ENCODE measurements at regions of chr11 and their contacts with region 1.

Region 1: DNA sequence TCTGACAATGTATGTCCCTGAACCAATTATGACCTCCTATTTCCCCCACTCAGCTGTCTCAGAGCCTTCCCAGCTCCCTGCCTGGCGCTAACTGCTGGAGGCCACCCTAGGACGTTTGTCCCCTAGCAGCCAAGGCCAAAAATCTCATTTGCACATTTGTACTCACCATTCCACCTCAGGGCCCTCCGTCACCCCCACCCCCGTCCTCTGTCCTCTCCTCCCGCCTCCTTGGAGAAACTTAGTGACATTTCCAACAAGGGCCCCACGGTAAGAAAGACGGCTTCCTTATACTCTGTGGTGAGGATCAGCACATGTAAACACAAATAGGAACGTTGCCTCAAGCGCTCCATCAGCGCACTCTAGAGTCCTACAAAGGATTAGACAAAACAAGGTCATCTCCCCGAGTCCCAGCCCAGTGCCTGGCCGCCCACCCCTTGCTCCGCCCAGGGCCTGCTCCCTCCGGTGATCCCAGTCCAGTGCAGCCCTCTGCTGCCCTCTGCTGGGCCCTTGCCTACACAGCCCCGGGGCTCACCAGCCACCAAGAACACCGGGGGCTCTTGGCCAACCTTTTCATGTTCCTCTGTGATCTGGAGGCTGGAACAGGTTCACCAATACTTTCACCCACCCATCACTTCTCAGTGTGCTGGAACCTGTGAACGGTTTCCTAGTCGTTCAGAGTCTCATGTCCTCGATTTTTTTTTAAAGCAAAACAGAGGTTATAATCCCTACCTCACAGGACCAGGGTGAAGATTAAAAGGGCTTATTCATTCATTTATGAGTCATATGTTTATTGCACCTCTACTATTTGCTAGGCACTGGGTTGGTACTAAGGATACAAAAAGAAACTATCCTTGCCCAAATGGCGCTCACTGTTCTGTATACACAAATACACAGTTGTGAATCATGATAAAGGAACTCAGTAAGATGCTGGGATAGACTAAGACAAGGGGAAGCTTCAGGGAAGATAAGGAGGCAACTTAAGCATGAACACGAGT is 15.3 kb upstream of the CTR9 start:
- DNase-seq: peak; percentile 94
- H3K4me3 ChIP-seq: peak overlapping the region; percentile 38
- H3K27ac ChIP-seq: peak overlapping the region; percentile 75
- H3K4me1 ChIP-seq: peaks cover 8% of the 10 kb centered on the region
- H3K27me3 ChIP-seq: peaks cover 5% of the 10 kb centered on the region
- CTCF ChIP-seq: peak; percentile 99

Region 2: GRCh38 chr11:10405855-10406592 is 329.8 kb before region 1 on chr11:
- intact Hi-C with region 1: loop called (anchors 5 kb)
- DNase-seq: peak; percentile 49
- H3K4me3 ChIP-seq: no peak overlapping the region
- H3K27ac ChIP-seq: no peak overlapping the region
- H3K4me1 ChIP-seq: peaks cover 18% of the 10 kb centered on the region
- H3K27me3 ChIP-seq: no peaks in the 10 kb centered on the region
- CTCF ChIP-seq: peak; percentile 81